A549 (cell line): ENCODE measurements at regions of chr2 and their contacts with region 1.

Region 1: DNA sequence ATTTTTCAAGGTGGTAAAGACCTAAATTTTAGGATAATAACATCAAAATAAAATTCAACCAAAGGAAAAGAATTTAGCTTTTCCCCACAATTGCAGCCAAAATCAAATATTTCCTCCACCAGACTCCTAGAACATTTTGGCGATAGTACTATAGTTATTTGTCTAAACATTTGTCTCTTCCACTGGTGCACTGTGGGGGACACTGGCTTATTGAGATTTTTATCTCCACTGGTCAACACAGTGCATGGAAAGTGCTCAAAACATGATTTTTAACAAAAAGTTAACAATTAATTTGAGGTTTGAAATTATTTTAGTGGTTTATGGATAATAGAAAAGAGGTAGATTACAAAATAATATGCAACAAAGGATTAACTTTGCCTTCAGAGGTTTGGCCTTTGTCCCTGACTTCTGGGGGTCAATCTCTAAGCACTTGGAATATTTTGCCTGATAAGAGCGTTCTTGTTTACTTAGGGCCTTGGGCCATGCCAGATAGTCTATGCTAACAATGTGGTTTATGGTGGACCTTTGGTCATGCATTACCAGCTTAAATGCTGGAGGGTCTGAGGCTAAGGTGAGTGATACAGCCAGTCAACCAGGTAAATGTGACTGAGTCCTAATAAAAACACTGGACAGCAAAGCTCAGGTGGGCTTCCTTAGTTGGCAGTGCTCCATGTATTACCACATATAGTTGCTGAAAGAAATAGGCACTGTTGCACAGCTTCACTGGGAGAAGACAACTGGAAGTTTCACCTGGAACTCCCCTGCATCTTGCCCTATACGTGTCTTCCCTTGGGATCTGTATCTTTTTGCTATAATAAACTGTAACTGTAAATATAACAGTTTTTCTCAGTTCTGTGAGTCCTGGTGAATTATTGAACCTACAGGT is 67.2 kb upstream of the SATB2 start:
- DNase-seq: no peak
- ATAC-seq: no peak
- H3K4me3 ChIP-seq: no peak overlapping the region
- H3K27ac ChIP-seq: no peak overlapping the region
- H3K4me1 ChIP-seq: no peaks in the 10 kb centered on the region
- CTCF ChIP-seq: no peak
- EP300 ChIP-seq: no peak
- POLR2A ChIP-seq: no peak
- RAD21 ChIP-seq: no peak

Region 2: GRCh38 chr2:198168656-198169055 is 1356.3 kb before region 1 on chr2:
- CTCF ChIA-PET with region 1: interaction called, 10 read pairs
- POLR2A ChIA-PET with region 1: no interaction called
- DNase-seq: no peak
- ATAC-seq: no peak
- H3K4me3 ChIP-seq: no peak overlapping the region
- H3K27ac ChIP-seq: no peak overlapping the region
- H3K4me1 ChIP-seq: no peaks in the 10 kb centered on the region
- CTCF ChIP-seq: no peak
- EP300 ChIP-seq: no peak
- POLR2A ChIP-seq: no peak
- RAD21 ChIP-seq: no peak

Region 3: DNA sequence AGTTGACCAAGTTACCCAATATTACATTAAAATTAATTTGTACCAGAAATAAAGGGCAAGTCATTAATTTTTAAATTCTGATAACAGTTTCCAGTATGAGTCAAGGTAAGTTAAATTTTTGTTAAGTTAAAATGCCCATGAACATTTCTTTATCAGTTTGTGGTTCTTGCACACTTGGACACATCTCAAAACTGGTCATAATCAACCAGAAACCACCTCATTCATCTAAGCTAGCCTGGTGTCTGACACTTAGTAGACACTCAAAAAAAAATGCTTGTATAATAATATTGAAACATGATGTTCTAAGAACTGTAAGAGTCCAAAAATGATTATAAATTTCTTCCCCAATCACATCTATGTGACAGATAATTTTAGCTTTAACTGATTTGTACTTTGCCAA is 129.6 kb before region 1 on chr2:
- CTCF ChIA-PET with region 1: no interaction called
- POLR2A ChIA-PET with region 1: no interaction called
- DNase-seq: no peak
- ATAC-seq: no peak
- H3K4me3 ChIP-seq: no peak overlapping the region
- H3K27ac ChIP-seq: no peak overlapping the region
- H3K4me1 ChIP-seq: no peaks in the 10 kb centered on the region
- CTCF ChIP-seq: no peak
- EP300 ChIP-seq: no peak
- POLR2A ChIP-seq: no peak
- RAD21 ChIP-seq: no peak